Body of pancreas (tissue), 4 donors: ENCODE measurements at regions of chr5 and their contacts with region 1.

Region 1: GRCh38 chr5:131796793-131797693 is at the start of gene FNIP1:
- DNase-seq: peak; percentile 98 to 99 (median 99)
- ATAC-seq: peak; percentile 97
- H3K4me3 ChIP-seq: peak within 1 kb of the TSS; percentile 75 to 86
- H3K27ac ChIP-seq: peak within 1 kb of the TSS; percentile 97 to 99 (median 98)
- H3K4me1 ChIP-seq: peaks cover 30% of the 10 kb centered on the region
- H3K27me3 ChIP-seq: no peaks in the 10 kb centered on the region
- CTCF ChIP-seq: peak in 2 of 7 experiments; percentile 10 to 26
- POLR2A ChIP-seq: peak; percentile 88 to 95 (median 92)
- total RNA-seq, gene FNIP1: 20.5 to 35.9 TPM

Region 2: DNA sequence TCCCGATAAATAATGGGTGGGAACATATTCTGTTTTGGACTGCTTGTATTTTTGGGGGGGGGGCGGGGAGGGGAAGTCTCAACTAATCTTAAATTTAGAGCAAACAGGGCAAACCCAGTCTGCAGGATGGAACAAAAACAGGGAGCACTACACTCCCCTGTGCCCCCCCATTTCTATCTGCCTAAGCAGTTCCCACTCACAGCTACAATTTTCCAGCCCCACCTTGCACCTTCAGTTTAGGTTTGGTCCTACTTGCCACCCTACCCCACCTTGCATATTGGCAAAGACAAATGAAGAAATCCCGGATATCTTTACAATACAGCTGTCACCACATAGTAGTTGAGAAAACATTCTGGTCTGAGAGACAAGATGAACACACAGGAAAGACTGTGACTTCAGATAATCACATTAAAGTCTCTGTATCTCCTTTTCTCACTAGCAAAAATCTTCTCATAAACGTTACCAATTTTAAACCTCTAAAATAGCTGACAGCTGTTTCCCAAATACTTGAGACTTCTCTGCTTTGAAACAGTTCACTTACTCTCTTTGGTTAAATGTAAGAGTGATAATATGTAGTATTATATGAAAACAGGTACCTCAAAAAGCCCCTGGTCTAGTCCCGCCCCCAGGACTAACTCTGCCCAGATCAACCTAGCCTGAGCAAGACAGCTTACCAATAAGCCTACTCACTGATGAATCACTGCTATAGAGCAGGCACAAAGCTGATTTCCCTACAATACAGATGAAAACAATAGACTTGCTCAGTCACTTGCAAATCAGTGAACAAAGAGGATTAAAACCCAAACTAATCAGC is 156.8 kb before region 1 on chr5:
- intact Hi-C with region 1: loop called (anchors 10 kb)
- DNase-seq: no peak
- ATAC-seq: no peak
- H3K4me3 ChIP-seq: no peak overlapping the region
- H3K27ac ChIP-seq: no peak overlapping the region
- H3K4me1 ChIP-seq: peaks cover 9% of the 10 kb centered on the region
- H3K27me3 ChIP-seq: no peaks in the 10 kb centered on the region
- CTCF ChIP-seq: no peak
- POLR2A ChIP-seq: no peak

Region 3: DNA sequence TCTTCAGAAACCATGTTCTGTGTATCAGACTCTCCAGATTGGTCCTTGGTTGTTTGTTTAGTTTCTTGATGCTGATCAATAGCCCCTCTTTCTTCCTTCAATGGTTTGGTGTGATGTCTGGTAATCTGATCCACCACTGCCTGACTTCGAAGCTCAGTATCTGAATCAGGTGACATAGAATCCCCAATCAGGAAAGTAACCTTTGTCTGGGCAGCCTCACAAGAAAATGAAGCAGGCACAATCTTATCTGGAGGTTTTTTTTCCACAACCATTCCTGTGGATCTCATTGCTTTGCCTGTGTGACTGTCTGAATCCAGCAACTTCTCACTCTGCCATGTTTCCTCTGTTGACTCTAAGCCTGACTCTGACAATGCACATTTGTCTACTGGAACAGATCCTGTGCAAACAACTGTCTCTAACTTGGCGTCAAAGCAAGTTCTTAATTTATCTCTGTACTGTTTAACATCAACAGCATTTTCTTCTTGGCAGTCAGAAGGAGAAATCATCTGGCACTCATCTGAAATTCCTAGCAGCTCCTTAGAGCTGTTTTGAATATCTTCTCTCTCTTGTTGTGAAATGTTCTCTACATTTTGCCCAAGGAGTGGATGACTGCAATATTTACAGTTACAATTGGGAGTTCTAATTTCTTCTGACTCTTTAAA is 124.9 kb before region 1 on chr5:
- intact Hi-C with region 1: no loop called
- DNase-seq: peak in 1 of 4 donors; percentile 40
- ATAC-seq: peak; percentile 80
- H3K4me3 ChIP-seq: no peak overlapping the region
- H3K27ac ChIP-seq: peak overlapping the region in 3 of 4 donors; percentile 3 to 48 (median 8)
- H3K4me1 ChIP-seq: peaks cover 19% of the 10 kb centered on the region
- H3K27me3 ChIP-seq: no peaks in the 10 kb centered on the region
- CTCF ChIP-seq: no peak
- POLR2A ChIP-seq: no peak

Region 4: DNA sequence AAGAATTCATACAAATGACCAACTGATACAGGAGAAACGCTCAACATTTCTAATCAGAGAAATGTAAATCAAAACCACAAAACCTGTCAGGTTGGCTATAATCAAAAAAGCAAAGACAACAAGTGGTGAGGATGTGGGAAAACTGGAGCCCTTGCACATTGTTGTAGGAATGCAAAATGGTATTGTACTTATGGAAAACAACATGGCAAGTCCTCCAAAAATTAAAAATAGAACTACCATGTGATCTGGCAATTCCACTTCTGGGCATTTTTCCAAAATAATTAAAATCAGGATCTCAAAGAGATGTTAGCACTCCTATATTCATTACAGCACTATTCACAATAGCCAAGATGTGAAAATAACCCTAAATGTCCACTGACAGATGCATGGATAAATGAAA is 76.3 kb before region 1 on chr5:
- intact Hi-C with region 1: no loop called
- DNase-seq: no peak
- ATAC-seq: no peak
- H3K4me3 ChIP-seq: no peak overlapping the region
- H3K27ac ChIP-seq: no peak overlapping the region
- H3K4me1 ChIP-seq: no peaks in the 10 kb centered on the region
- H3K27me3 ChIP-seq: no peaks in the 10 kb centered on the region
- CTCF ChIP-seq: no peak
- POLR2A ChIP-seq: no peak